ENCODE measurements at regions of chr14 and their contacts with region 1.

Region 1: GRCh38 chr14:74905375-74906142 is 17.5 kb downstream of the RPS6KL1 start:
- DNase-seq: peak; percentile 52
- H3K4me3 ChIP-seq: no peak overlapping the region
- H3K27ac ChIP-seq: no peak overlapping the region
- H3K4me1 ChIP-seq: peaks cover 5% of the 10 kb centered on the region
- H3K27me3 ChIP-seq: no peaks in the 10 kb centered on the region
- CTCF ChIP-seq: peak; percentile 94 to 95
- POLR2A ChIP-seq: no peak

Region 2: GRCh38 chr14:74392616-74393570 is 512.7 kb before region 1 on chr14:
- CTCF ChIA-PET with region 1: no interaction called
- POLR2A ChIA-PET with region 1: no interaction called
- dilution Hi-C with region 1: no loop called
- intact Hi-C with region 1: no loop called
- DNase-seq: no peak
- H3K4me3 ChIP-seq: no peak overlapping the region
- H3K27ac ChIP-seq: no peak overlapping the region
- H3K4me1 ChIP-seq: no peaks in the 10 kb centered on the region
- H3K27me3 ChIP-seq: peaks cover 0 to 4% of the 10 kb centered on the region in 2 experiments
- CTCF ChIP-seq: no peak
- POLR2A ChIP-seq: no peak

Region 3: GRCh38 chr14:74712499-74713394 is 192.8 kb before region 1 on chr14 and contains the starts of genes AREL1 and FCF1:
- CTCF ChIA-PET with region 1: no interaction called
- POLR2A ChIA-PET with region 1: no interaction called
- dilution Hi-C with region 1: no loop called
- intact Hi-C with region 1: no loop called
- DNase-seq: peak; percentile 87
- H3K4me3 ChIP-seq: peak within 1 kb of the TSS; percentile 66 to 93 (median 92)
- H3K27ac ChIP-seq: peak within 1 kb of the TSS; percentile 37
- H3K4me1 ChIP-seq: peaks cover 15% of the 10 kb centered on the region
- H3K27me3 ChIP-seq: no peaks in the 10 kb centered on the region
- CTCF ChIP-seq: no peak
- POLR2A ChIP-seq: peak; percentile 75
- total RNA-seq, gene AREL1: 46.4 and 50.3 TPM in 2 replicates
- total RNA-seq, gene FCF1: 57.8 and 58.2 TPM in 2 replicates

Region 4: DNA sequence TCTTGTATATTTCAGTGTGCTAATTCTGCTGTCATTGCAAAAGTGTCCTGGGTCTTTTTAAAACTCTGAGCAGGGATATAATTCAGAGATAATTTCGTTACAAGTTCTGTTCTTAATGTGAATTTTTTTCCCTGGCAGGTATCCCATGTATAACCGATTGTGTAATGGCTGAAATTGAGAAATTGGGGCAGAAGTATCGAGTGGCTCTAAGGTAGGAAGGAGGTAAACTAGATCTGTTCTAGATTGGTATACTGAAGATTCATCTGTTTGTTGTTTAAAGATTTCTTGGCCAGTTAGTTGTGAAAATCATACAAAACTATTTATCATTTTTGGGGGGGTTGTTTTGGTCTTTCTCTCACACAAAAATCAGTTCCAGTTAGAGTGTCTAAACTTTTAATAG is 182.4 kb before region 1 on chr14:
- CTCF ChIA-PET with region 1: no interaction called
- POLR2A ChIA-PET with region 1: no interaction called
- dilution Hi-C with region 1: no loop called
- intact Hi-C with region 1: no loop called
- DNase-seq: no peak
- H3K4me3 ChIP-seq: no peak overlapping the region
- H3K27ac ChIP-seq: no peak overlapping the region
- H3K4me1 ChIP-seq: no peaks in the 10 kb centered on the region
- H3K27me3 ChIP-seq: no peaks in the 10 kb centered on the region
- CTCF ChIP-seq: no peak
- POLR2A ChIP-seq: no peak

Region 5: GRCh38 chr14:74860906-74861733 is 44.4 kb before region 1 on chr14:
- CTCF ChIA-PET with region 1: interaction called, 468 read pairs
- POLR2A ChIA-PET with region 1: interaction called, 6 read pairs
- dilution Hi-C with region 1: no loop called
- intact Hi-C with region 1: loop called (anchors 1 kb)
- DNase-seq: peak; percentile 83
- H3K4me3 ChIP-seq: no peak overlapping the region
- H3K27ac ChIP-seq: no peak overlapping the region
- H3K4me1 ChIP-seq: no peaks in the 10 kb centered on the region
- H3K27me3 ChIP-seq: no peaks in the 10 kb centered on the region
- CTCF ChIP-seq: peak; percentile 85 to 86
- POLR2A ChIP-seq: no peak

Region 6: GRCh38 chr14:74881431-74882361 is 23.9 kb before region 1 on chr14 and contains the start of gene DLST:
- CTCF ChIA-PET with region 1: interaction called, 43 read pairs
- POLR2A ChIA-PET with region 1: interaction called, 6 read pairs
- dilution Hi-C with region 1: no loop called
- intact Hi-C with region 1: loop called (anchors 1 kb)
- DNase-seq: peak; percentile 87
- H3K4me3 ChIP-seq: peak within 1 kb of the TSS; percentile 49 to 95 (median 93)
- H3K27ac ChIP-seq: peak within 1 kb of the TSS; percentile 74
- H3K4me1 ChIP-seq: peaks cover 24% of the 10 kb centered on the region
- H3K27me3 ChIP-seq: no peaks in the 10 kb centered on the region
- CTCF ChIP-seq: no peak
- POLR2A ChIP-seq: peak; percentile 96
- total RNA-seq, gene DLST: 105 and 110 TPM in 2 replicates

Region 7: GRCh38 chr14:74893614-74894091 is 11.9 kb before region 1 on chr14:
- CTCF ChIA-PET with region 1: interaction called, 41 read pairs
- POLR2A ChIA-PET with region 1: no interaction called
- dilution Hi-C with region 1: no loop called
- intact Hi-C with region 1: no loop called
- DNase-seq: no peak
- H3K4me3 ChIP-seq: no peak overlapping the region
- H3K27ac ChIP-seq: no peak overlapping the region
- H3K4me1 ChIP-seq: no peaks in the 10 kb centered on the region
- H3K27me3 ChIP-seq: no peaks in the 10 kb centered on the region
- CTCF ChIP-seq: no peak
- POLR2A ChIP-seq: no peak

Region 8: GRCh38 chr14:74932401-74932901 is 26.9 kb after region 1 on chr14:
- CTCF ChIA-PET with region 1: interaction called, 12 read pairs
- POLR2A ChIA-PET with region 1: no interaction called
- dilution Hi-C with region 1: no loop called
- intact Hi-C with region 1: no loop called
- DNase-seq: peak; percentile 93
- H3K4me3 ChIP-seq: no peak overlapping the region
- H3K27ac ChIP-seq: peak overlapping the region; percentile 48
- H3K4me1 ChIP-seq: peaks cover 7% of the 10 kb centered on the region
- H3K27me3 ChIP-seq: no peaks in the 10 kb centered on the region
- CTCF ChIP-seq: no peak
- POLR2A ChIP-seq: no peak

Region 9: GRCh38 chr14:74945823-74946682 is 40.5 kb after region 1 on chr14:
- CTCF ChIA-PET with region 1: interaction called, 12 read pairs
- POLR2A ChIA-PET with region 1: no interaction called
- dilution Hi-C with region 1: no loop called
- intact Hi-C with region 1: no loop called
- DNase-seq: peak; percentile 69
- H3K4me3 ChIP-seq: no peak overlapping the region
- H3K27ac ChIP-seq: peak overlapping the region; percentile 30
- H3K4me1 ChIP-seq: peaks cover 39% of the 10 kb centered on the region
- H3K27me3 ChIP-seq: no peaks in the 10 kb centered on the region
- CTCF ChIP-seq: peak; percentile 80 to 96
- POLR2A ChIP-seq: no peak

Measured in endothelial cell of umbilical vein (primary cell).